IMR-90 (cell line): ENCODE measurements at regions of chr1 and their contacts with region 1.

Region 1: GRCh38 chr1:54052934-54053744 is at the starts of genes TCEANC2 and TMEM59:
- DNase-seq: peak; percentile 99
- ATAC-seq: peak; percentile 92
- H3K4me3 ChIP-seq: peak within 1 kb of the TSS; percentile 79
- H3K27ac ChIP-seq: peak within 1 kb of the TSS; percentile 75
- H3K4me1 ChIP-seq: peaks cover 2% of the 10 kb centered on the region; the same call in 1 of the 2 replicates
- H3K27me3 ChIP-seq: no peaks in the 10 kb centered on the region
- CTCF ChIP-seq: 0 out of 2 replicates have a peak, but pooled peaks have one; percentile 2
- POLR2A ChIP-seq: peak; percentile 54
- RAD21 ChIP-seq: no peak
- total RNA-seq, gene TCEANC2: 3.1 and 3.2 TPM in 2 replicates
- total RNA-seq, gene TMEM59: 199 and 241 TPM in 2 replicates

Region 2: GRCh38 chr1:53878492-53879105 is 174.5 kb before region 1 on chr1:
- CTCF ChIA-PET with region 1: interaction called, 3 read pairs
- POLR2A ChIA-PET with region 1: no interaction called
- dilution Hi-C with region 1: no loop called
- in situ Hi-C with region 1: loop called (anchors 25 kb)
- intact Hi-C with region 1: loop called (anchors 5 kb)
- DNase-seq: peak; percentile 69
- ATAC-seq: peak; percentile 65
- H3K4me3 ChIP-seq: no peak overlapping the region
- H3K27ac ChIP-seq: no peak overlapping the region
- H3K4me1 ChIP-seq: no peaks in the 10 kb centered on the region
- H3K27me3 ChIP-seq: no peaks in the 10 kb centered on the region
- CTCF ChIP-seq: peak; percentile 67
- POLR2A ChIP-seq: no peak
- RAD21 ChIP-seq: peak; percentile 72

Region 3: GRCh38 chr1:53957231-53957818 is 95.8 kb before region 1 on chr1:
- CTCF ChIA-PET with region 1: interaction called, 3 read pairs
- POLR2A ChIA-PET with region 1: no interaction called
- dilution Hi-C with region 1: no loop called
- in situ Hi-C with region 1: no loop called
- intact Hi-C with region 1: loop called (anchors 2 kb)
- DNase-seq: peak; percentile 64
- ATAC-seq: peak; percentile 91
- H3K4me3 ChIP-seq: no peak overlapping the region
- H3K27ac ChIP-seq: peak overlapping the region; percentile 75
- H3K4me1 ChIP-seq: peaks cover 14% of the 10 kb centered on the region
- H3K27me3 ChIP-seq: no peaks in the 10 kb centered on the region
- CTCF ChIP-seq: no peak
- POLR2A ChIP-seq: no peak
- RAD21 ChIP-seq: no peak

Region 4: GRCh38 chr1:54028306-54029251 is 24.6 kb before region 1 on chr1:
- CTCF ChIA-PET with region 1: no interaction called
- POLR2A ChIA-PET with region 1: no interaction called
- dilution Hi-C with region 1: no loop called
- in situ Hi-C with region 1: no loop called
- intact Hi-C with region 1: no loop called
- DNase-seq: peak; percentile 28
- ATAC-seq: peak; percentile 37; the same call in 1 of the 2 replicates
- H3K4me3 ChIP-seq: no peak overlapping the region
- H3K27ac ChIP-seq: no peak overlapping the region
- H3K4me1 ChIP-seq: no peaks in the 10 kb centered on the region
- H3K27me3 ChIP-seq: peaks cover 1% of the 10 kb centered on the region; the same call in 1 of the 2 replicates
- CTCF ChIP-seq: no peak
- POLR2A ChIP-seq: no peak
- RAD21 ChIP-seq: no peak